ENCODE measurements at regions of chr5 and their contacts with region 1.

Region 1: GRCh38 chr5:175517818-175518450 is 39.6 kb downstream of the SFXN1 start:
- DNase-seq: peak; percentile 71
- H3K4me3 Mint-ChIP-seq: peak overlapping the region; percentile 67
- H3K27ac Mint-ChIP-seq: peak overlapping the region; percentile 98
- H3K4me1 Mint-ChIP-seq: peaks cover 63% of the 10 kb centered on the region
- H3K27me3 Mint-ChIP-seq: no peaks in the 10 kb centered on the region

Region 2: GRCh38 chr5:175214152-175214551 is 303.8 kb before region 1 on chr5:
- intact Hi-C with region 1: no loop called
- DNase-seq: no peak
- H3K4me3 Mint-ChIP-seq: no peak overlapping the region
- H3K27ac Mint-ChIP-seq: no peak overlapping the region
- H3K4me1 Mint-ChIP-seq: no peaks in the 10 kb centered on the region
- H3K27me3 Mint-ChIP-seq: no peaks in the 10 kb centered on the region

Region 3: GRCh38 chr5:175478384-175479124 is 39.4 kb before region 1 on chr5 and contains the start of gene SFXN1:
- intact Hi-C with region 1: loop called (anchors 1 kb)
- DNase-seq: peak; percentile 82
- H3K4me3 Mint-ChIP-seq: peak within 1 kb of the TSS; percentile 95
- H3K27ac Mint-ChIP-seq: peak within 1 kb of the TSS; percentile 92
- H3K4me1 Mint-ChIP-seq: peaks cover 52% of the 10 kb centered on the region
- H3K27me3 Mint-ChIP-seq: peaks cover 8% of the 10 kb centered on the region
- total RNA-seq, gene SFXN1: 318 and 326 TPM in 2 replicates

Region 4: DNA sequence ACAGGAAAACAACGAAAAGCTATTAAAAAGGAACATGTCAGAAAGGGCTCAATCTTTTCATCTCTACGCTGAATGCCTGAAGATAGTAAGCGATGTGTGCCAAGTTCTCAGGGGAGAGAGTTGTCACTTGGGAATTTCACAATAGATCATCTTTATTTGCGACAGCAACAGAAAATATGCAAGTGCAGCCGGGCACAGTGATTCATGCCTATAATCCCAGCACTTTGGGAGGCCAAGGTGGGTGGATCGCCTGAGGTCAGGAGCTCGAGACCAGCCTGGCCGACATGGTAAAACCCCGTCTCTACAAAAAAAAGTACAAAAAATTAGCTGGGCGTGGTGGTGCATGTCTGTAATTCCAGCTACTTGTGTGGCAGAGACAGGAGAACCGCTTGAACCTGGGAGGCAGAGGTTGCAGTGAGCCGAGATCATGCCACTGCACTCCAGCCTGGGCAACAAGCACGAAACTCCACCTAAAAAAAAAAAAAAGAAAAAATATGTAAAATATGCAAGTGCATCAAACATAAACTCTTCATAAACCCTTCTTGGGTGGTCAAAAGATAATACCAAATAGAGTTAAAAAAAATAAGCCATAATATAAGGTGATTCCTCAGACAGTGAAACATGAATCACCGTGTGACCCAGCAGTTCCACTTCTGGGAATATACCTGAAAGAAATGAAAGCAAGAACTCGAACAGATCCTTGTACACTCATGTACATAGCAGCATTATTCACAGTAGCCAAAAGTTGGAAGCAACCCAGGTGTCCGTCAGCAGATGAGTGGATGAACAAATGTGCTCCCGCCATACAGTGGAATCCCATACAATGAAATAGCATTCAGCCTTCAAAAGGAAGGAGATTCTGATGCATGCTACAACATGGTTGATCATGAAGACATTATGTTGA is 23.4 kb before region 1 on chr5:
- intact Hi-C with region 1: loop called (anchors 2 kb)
- DNase-seq: no peak
- H3K4me3 Mint-ChIP-seq: no peak overlapping the region
- H3K27ac Mint-ChIP-seq: peak overlapping the region; percentile 70
- H3K4me1 Mint-ChIP-seq: peaks cover 43% of the 10 kb centered on the region
- H3K27me3 Mint-ChIP-seq: no peaks in the 10 kb centered on the region

Region 5: GRCh38 chr5:175501759-175502339 is 16.1 kb before region 1 on chr5:
- intact Hi-C with region 1: loop called (anchors 1 kb)
- DNase-seq: no peak
- H3K4me3 Mint-ChIP-seq: no peak overlapping the region
- H3K27ac Mint-ChIP-seq: peak overlapping the region; percentile 4
- H3K4me1 Mint-ChIP-seq: peaks cover 40% of the 10 kb centered on the region
- H3K27me3 Mint-ChIP-seq: no peaks in the 10 kb centered on the region

Region 6: DNA sequence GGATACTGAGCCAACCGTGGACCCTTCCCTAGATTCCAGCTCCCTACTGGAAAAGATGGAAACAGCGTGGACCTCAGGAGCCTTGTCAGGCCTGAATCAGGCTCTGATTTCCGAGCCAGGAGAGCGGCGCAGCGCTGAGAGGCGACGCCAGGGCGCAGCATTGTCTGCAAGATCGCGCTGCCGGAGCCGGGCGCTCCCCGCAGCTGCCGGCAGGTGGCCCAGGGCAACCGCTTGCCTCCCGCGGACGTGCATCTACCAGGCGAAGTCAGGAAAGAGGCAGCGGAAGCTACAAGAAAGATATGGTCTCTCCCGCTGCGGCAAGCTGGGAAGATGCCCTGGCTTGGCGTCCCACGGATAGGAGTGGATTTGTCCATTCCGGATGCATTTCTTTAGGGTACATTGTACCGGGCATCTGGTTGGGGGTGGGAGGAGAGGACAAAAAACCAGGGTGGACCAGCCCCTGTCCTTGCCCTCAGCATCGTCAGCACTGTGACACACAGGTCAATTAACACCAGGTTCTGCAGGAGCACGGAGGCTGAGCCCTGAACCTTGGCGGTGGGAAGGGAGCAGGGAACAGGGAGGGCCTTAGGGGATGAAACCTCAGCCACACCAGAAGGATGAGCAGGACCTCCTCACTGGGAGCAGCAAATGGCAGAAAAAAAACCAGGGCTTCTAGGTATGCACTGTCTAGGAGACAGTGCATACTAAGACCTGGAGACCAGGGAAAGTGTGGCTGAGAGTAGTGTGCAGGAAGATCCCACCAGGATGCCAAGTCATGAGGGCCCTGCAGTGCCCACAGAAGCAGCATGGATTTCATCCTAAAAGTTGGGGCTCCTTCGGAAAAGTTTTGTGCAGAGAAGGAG is 16.4 kb after region 1 on chr5:
- intact Hi-C with region 1: loop called (anchors 1 kb)
- DNase-seq: peak; percentile 79
- H3K4me3 Mint-ChIP-seq: peak overlapping the region; percentile 45
- H3K27ac Mint-ChIP-seq: no peak overlapping the region
- H3K4me1 Mint-ChIP-seq: peaks cover 48% of the 10 kb centered on the region
- H3K27me3 Mint-ChIP-seq: no peaks in the 10 kb centered on the region

Region 7: DNA sequence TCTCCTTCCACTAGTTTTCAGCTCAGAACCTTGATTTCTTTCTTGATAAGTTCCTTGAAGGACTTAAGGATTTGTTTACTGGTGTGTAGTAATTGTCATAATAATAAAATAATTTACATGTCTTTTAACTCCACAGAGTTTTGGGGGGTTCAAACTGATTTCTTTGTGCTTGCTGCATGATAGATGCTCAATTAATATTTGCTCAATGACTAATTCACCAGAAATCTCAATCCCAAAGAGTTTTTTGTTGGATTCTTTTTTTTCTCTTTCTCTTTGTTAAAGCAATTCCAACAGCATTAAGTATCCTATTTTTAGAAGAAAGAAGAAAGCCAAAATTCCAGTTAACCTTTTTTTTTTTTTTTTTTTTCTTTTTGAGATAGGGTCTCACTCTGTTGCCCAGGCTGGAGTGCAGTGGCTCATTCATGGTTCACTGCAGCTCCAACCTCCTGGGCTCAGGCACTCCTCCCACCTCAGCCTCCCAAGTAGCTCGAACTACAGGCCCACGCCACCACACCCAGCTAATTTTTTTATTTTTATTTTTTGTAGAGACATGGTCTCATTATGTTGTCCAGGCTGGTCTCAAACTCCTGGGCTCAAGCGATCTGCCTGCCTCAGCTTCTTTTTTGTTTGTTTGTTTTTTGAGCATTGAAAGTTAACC is 941.1 kb after region 1 on chr5:
- intact Hi-C with region 1: no loop called
- DNase-seq: no peak
- H3K4me3 Mint-ChIP-seq: no peak overlapping the region
- H3K27ac Mint-ChIP-seq: no peak overlapping the region
- H3K4me1 Mint-ChIP-seq: peaks cover 15% of the 10 kb centered on the region
- H3K27me3 Mint-ChIP-seq: no peaks in the 10 kb centered on the region

Measured in activated T-helper 2 cell treated with anti-CD3 and anti-CD28 coated beads, Interferon-gamma antibody, Interleukin-2, Interleukin-4, amounts not matched to agents 10 μg/mL and 5 μg/mL and 100 μg/mL, durations not matched to agents 14 hours and 24 hours and 36 hours (primary cell).